MCF 10A (cell line): ENCODE measurements at regions of chr20 and their contacts with region 1.

Region 1: DNA sequence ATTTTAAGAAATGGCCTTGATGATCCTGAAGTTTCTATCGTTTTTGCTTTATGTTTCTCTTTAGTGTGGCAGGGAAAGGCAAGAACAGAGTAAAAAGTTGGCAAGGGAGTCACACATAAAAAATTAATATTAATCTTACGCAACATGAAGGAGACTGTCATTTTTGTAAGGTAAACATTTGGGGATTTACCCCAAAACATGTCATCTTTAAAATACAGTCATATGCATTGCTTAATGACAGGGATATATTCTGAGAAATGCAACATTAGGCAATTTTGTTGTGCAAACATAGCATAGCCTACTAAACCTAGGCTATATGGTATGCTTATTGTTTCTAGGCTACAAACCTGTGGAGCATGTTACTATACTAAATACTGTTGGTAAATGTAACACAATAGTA is 5.4 kb downstream of the RBL1 start:
- DNase-seq: peak; percentile 31
- H3K4me3 Mint-ChIP-seq: no peak overlapping the region
- H3K27ac Mint-ChIP-seq: no peak overlapping the region
- H3K4me1 Mint-ChIP-seq: peaks cover 16% of the 10 kb centered on the region
- H3K27me3 Mint-ChIP-seq: no peaks in the 10 kb centered on the region
- CTCF ChIP-seq: no peak

Region 2: GRCh38 chr20:37066168-37066567 is 24.2 kb before region 1 on chr20:
- CTCF ChIA-PET with region 1: no interaction called
- POLR2A ChIA-PET with region 1: interaction called, 12 read pairs
- intact Hi-C with region 1: loop called (anchors 1 kb)
- DNase-seq: no peak
- H3K4me3 Mint-ChIP-seq: no peak overlapping the region
- H3K27ac Mint-ChIP-seq: no peak overlapping the region
- H3K4me1 Mint-ChIP-seq: peaks cover 4% of the 10 kb centered on the region
- H3K27me3 Mint-ChIP-seq: no peaks in the 10 kb centered on the region
- CTCF ChIP-seq: no peak